Thyroid gland (tissue), 4 donors: ENCODE measurements at regions of chr15 and their contacts with region 1.

Region 1: DNA sequence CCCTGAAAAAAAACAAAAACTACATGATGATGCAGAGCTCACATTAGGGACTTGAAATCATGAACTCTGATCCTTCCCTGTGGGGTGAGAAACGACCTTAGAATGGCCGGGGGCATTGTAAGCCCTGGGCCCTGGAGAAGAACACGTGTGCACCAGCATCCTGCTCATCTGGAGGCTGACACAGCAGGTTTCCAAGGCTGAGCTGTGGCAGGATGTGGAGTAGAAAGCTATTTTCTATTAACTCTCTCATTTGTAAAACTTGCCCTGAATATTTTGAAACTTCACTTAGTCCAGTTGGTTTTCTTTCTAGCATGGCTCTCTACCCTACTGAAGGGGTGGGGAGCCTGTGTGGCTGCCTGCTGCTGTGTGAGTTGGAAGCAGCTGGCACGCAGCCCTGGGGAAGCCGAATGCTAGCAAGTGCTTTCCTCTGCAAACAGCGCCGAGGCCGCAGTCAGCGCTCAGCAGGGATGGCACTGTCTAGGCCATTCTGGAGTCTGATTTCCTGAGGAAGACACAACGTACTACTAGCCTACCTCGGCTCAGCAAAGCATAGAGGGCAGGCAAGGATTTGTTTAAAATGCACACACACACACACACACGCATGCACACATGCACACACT is 58.0 kb downstream of the GABRG3 start:
- DNase-seq: no peak
- H3K4me3 ChIP-seq: no peak overlapping the region
- H3K27ac ChIP-seq: no peak overlapping the region
- H3K4me1 ChIP-seq: no peaks in the 10 kb centered on the region
- H3K27me3 ChIP-seq: no peaks in the 10 kb centered on the region
- CTCF ChIP-seq: no peak
- POLR2A ChIP-seq: no peak

Region 2: GRCh38 chr15:26891448-26892181 is 137.4 kb before region 1 on chr15:
- intact Hi-C with region 1: loop called (anchors 10 kb)
- DNase-seq: peak; percentile 57 to 76
- H3K4me3 ChIP-seq: peak overlapping the region in 1 of 3 donors; percentile 6
- H3K27ac ChIP-seq: no peak overlapping the region
- H3K4me1 ChIP-seq: peaks cover 3 to 10% of the 10 kb centered on the region in 2 donors
- H3K27me3 ChIP-seq: no peaks in the 10 kb centered on the region
- CTCF ChIP-seq: peak; percentile 29 to 69 (median 50)
- POLR2A ChIP-seq: no peak

Region 3: DNA sequence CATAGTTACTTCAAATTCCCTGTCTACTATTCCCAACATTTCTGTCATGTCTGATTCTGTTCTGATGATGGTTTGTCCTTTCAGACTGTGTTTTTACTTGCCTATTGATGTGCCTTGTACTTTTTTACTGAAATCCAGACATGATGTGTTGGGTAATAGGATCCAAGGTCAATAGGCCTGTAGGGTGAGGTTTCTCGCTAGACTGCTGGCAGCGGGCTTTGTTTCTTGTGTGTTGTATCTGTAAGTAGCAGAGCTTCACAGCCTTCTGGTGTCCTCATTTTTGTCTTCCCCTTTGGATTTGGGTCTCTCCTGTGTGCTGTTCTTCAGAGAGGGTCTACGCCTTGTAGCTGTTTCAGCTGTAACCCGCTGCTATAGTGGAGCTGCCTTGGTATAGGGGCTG is 82.4 kb after region 1 on chr15:
- intact Hi-C with region 1: no loop called
- DNase-seq: no peak
- H3K4me3 ChIP-seq: no peak overlapping the region
- H3K27ac ChIP-seq: no peak overlapping the region
- H3K4me1 ChIP-seq: no peaks in the 10 kb centered on the region
- H3K27me3 ChIP-seq: no peaks in the 10 kb centered on the region
- CTCF ChIP-seq: no peak
- POLR2A ChIP-seq: no peak

Region 4: GRCh38 chr15:27365441-27365840 is 336.5 kb after region 1 on chr15:
- intact Hi-C with region 1: no loop called
- DNase-seq: no peak
- H3K4me3 ChIP-seq: no peak overlapping the region
- H3K27ac ChIP-seq: no peak overlapping the region
- H3K4me1 ChIP-seq: no peaks in the 10 kb centered on the region
- H3K27me3 ChIP-seq: no peaks in the 10 kb centered on the region
- CTCF ChIP-seq: no peak
- POLR2A ChIP-seq: no peak

Region 5: DNA sequence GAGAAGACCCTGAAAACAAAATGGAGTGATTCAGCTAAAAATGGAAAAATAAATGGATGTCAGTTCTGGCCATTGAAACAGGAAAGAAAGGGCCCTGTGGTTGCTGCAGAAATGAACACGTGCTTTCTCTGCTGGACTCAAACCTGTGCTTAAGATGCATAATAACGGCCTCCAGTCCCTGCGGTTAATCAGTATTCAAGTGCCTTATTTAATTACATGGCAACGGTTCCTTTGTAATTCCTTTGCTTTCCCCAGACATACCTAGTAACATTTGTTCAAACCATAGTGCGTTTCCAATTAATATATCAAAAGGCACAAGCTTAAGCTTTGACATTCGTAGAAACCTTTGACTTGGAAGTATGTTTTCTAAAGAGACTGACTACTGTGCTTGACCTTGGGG is 370.3 kb after region 1 on chr15:
- intact Hi-C with region 1: no loop called
- DNase-seq: no peak
- H3K4me3 ChIP-seq: no peak overlapping the region
- H3K27ac ChIP-seq: no peak overlapping the region
- H3K4me1 ChIP-seq: no peaks in the 10 kb centered on the region
- H3K27me3 ChIP-seq: no peaks in the 10 kb centered on the region
- CTCF ChIP-seq: no peak
- POLR2A ChIP-seq: no peak